ENCODE measurements at regions of chr12 and their contacts with region 1.

Region 1: DNA sequence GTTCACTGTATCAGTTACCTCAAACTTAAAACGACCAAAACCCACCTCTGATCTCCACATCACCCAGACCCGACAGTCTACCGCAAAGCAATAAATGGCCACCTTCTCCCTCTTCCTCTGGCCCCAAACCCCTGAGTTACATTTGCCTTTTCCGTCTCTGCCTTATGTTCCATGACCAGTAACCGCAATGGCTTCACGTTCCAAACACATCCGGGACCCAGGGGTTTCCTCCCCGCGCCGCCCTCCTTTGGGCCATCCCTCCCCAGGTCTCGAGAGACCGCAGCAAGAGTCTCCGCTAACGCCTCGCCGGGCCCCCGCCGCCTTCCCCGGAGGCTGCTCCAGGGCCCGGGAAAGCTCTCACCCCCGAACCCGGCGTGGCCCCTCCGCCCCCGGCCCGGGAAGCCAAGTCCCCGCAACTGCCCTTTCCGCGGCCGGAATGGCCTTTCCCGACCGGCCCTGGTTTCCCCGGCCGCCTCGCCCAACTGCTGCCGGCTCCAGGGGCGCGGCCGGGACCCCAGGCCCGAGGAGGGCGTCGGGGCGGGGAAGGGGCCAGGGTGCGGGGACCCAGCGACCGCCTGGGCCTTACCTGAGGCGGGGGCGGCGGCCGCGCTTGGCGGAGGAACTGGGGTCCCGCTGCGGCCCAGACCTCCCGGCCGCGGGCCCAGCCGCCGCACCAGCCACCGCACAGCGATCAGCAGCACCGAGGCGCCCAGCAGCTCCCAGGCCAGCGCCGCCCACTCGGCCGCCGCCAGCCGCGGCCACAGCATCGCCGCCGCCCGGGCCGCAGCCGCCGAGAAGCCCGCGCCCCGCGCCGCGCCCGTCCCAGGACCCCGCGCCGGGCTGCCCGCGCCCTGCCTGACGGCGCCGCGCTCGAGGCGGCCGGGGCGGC is at the start of gene ANKLE2:
- DNase-seq: peak; percentile 74
- H3K4me3 Mint-ChIP-seq: peak within 1 kb of the TSS; percentile 94
- H3K27ac Mint-ChIP-seq: peak within 1 kb of the TSS; percentile 97
- H3K4me1 Mint-ChIP-seq: peaks cover 19% of the 10 kb centered on the region
- H3K27me3 Mint-ChIP-seq: no peaks in the 10 kb centered on the region
- total RNA-seq, gene ANKLE2: 143 and 152 TPM in 2 replicates

Region 2: DNA sequence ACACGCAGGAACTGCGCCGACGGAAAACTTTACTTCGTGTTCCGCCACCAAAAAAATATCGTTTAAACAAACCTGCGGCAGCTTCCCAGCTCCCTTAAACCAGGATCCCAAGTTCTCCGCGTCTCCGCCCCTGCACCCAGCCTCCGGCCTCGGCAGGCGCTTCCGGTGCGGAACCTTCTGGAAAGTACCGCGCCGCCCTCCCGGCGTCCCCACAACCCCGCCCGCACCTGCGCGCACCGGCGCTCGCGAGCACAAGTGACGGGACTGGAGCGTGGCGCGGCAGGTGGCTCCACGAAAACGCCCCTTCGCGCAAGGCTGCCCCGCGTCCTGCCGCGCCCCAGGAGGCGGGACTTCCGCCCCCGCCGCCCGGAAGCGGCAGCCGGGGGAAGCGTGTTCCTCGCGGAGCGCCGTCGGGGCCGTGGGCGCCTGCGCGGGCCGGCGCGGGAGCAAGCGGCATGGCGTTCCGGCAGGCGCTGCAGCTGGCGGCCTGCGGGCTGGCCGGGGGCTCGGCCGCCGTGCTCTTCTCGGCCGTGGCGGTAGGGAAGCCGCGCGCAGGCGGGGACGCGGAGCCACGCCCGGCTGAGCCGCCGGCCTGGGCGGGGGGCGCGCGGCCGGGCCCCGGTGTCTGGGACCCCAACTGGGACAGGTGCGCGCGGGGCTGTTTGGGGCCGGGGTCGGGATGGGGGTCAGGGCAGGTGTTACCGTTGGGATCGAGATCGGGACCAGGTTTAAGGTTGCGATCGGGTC is 50.7 kb before region 1 on chr12 and contains the start of gene PGAM5:
- intact Hi-C with region 1: loop called (anchors 10 kb)
- DNase-seq: peak; percentile 88
- H3K4me3 Mint-ChIP-seq: peak within 1 kb of the TSS; percentile 90
- H3K27ac Mint-ChIP-seq: peak within 1 kb of the TSS; percentile 80
- H3K4me1 Mint-ChIP-seq: peaks cover 12% of the 10 kb centered on the region
- H3K27me3 Mint-ChIP-seq: no peaks in the 10 kb centered on the region
- total RNA-seq, gene PGAM5: 78.6 and 80.7 TPM in 2 replicates

Region 3: DNA sequence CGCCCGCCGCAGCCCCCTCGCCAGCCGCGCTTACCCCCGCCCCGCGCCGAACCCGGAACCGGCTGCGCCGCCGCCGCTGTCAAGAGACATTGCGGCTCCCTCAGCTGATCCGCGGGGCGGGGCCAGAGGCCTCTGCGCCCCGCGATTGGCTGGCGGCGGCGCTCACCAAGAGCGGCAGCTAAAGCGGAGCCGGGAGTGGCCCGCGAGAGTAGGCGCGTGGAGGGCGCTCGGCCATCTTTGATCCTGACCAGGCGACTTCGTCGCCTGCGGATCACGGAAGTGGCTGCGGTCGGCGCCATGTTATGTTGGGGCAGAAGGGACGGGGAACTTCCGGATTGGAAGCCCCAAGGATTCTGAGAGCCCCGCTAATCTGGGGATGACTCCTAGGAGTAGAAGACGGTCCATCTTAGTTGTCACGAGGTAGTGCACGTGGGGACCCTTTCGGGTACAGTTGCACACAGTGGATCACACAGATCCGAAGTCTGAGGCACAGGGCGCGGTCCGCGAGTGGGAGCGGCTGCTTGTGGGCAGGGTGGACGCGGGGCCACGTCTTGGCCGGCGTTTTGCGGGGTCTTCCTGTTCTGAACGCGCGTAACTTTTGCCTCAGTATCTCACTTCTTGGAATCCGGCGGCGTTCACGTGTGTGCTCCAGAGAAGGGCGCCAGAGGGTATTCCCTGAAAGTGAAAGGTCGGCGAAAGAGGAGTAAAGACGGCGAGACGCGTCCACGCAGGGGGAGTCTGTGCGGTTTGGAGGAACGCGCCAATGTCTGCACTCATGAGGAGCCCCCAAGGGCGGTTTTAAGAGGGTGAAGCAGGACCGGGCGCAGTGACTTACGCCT is 126.5 kb after region 1 on chr12 and contains the start of gene CHFR:
- intact Hi-C with region 1: loop called (anchors 1 kb)
- DNase-seq: peak; percentile 94
- H3K4me3 Mint-ChIP-seq: peak within 1 kb of the TSS; percentile 97
- H3K27ac Mint-ChIP-seq: peak within 1 kb of the TSS; percentile 99
- H3K4me1 Mint-ChIP-seq: peaks cover 13% of the 10 kb centered on the region
- H3K27me3 Mint-ChIP-seq: peaks cover 3% of the 10 kb centered on the region
- total RNA-seq, gene CHFR: 55.0 and 59.9 TPM in 2 replicates

Region 4: GRCh38 chr12:133037207-133038005 is 276.1 kb after region 1 on chr12 and contains the start of gene ZNF84:
- intact Hi-C with region 1: loop called (anchors 2 kb)
- DNase-seq: peak; percentile 97
- H3K4me3 Mint-ChIP-seq: peak within 1 kb of the TSS; percentile 88
- H3K27ac Mint-ChIP-seq: peak within 1 kb of the TSS; percentile 98
- H3K4me1 Mint-ChIP-seq: peaks cover 6% of the 10 kb centered on the region
- H3K27me3 Mint-ChIP-seq: no peaks in the 10 kb centered on the region
- total RNA-seq, gene ZNF84: 20.7 and 21.3 TPM in 2 replicates

Region 5: GRCh38 chr12:133190176-133190575 is 428.9 kb after region 1 on chr12:
- intact Hi-C with region 1: no loop called
- DNase-seq: no peak
- H3K4me3 Mint-ChIP-seq: no peak overlapping the region
- H3K27ac Mint-ChIP-seq: no peak overlapping the region
- H3K4me1 Mint-ChIP-seq: no peaks in the 10 kb centered on the region
- H3K27me3 Mint-ChIP-seq: no peaks in the 10 kb centered on the region